Adrenal gland (tissue), 19 donors: ENCODE measurements at regions of chr5 and their contacts with region 1.

Region 1: GRCh38 chr5:77143998-77144836 is 57.1 kb upstream of the ZBED3 start:
- DNase-seq: peak; percentile 71 to 91 (median 84)
- H3K4me3 ChIP-seq: no peak overlapping the region
- H3K27ac ChIP-seq: no peak overlapping the region
- H3K4me1 ChIP-seq: no peaks in the 10 kb centered on the region
- H3K27me3 ChIP-seq: no peaks in the 10 kb centered on the region
- CTCF ChIP-seq: peak; percentile 78 to 91 (median 81)
- POLR2A ChIP-seq: no peak

Region 2: DNA sequence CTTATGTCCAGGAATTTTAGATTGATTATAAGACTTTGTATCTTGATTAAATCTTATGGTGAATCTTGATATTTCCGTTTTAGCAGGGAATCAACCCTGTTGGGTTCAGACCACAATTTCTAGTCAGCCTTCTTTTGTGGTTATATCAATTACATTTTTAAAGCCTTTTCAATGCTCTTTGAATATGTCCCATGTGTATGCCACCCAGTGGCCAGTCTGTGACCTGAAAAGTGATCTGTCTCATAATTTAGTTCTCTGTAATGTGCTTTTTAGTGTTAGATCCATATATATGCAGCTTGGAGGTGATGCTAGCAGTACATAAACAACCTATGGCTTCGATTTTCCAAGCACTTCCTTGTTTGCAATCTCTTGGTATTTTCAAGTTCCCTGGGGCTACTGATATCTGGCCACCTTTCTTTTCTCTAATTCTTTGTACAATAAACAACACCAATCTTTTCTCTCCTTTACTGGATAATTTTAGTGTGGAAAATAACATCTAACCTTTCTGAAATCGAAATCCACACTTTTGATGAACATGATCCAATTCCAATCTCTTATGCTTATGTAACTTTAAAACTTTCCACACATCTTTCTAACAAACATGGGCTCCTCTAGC is 95.0 kb after region 1 on chr5:
- intact Hi-C with region 1: loop called in 1 of 2 experiments (anchors 10 kb)
- DNase-seq: peak in 2 of 7 donors; percentile 30 to 40
- H3K4me3 ChIP-seq: no peak overlapping the region
- H3K27ac ChIP-seq: no peak overlapping the region
- H3K4me1 ChIP-seq: no peaks in the 10 kb centered on the region
- H3K27me3 ChIP-seq: no peaks in the 10 kb centered on the region
- CTCF ChIP-seq: peak in 5 of 6 experiments; percentile 28 to 44 (median 31)
- POLR2A ChIP-seq: no peak

Region 3: DNA sequence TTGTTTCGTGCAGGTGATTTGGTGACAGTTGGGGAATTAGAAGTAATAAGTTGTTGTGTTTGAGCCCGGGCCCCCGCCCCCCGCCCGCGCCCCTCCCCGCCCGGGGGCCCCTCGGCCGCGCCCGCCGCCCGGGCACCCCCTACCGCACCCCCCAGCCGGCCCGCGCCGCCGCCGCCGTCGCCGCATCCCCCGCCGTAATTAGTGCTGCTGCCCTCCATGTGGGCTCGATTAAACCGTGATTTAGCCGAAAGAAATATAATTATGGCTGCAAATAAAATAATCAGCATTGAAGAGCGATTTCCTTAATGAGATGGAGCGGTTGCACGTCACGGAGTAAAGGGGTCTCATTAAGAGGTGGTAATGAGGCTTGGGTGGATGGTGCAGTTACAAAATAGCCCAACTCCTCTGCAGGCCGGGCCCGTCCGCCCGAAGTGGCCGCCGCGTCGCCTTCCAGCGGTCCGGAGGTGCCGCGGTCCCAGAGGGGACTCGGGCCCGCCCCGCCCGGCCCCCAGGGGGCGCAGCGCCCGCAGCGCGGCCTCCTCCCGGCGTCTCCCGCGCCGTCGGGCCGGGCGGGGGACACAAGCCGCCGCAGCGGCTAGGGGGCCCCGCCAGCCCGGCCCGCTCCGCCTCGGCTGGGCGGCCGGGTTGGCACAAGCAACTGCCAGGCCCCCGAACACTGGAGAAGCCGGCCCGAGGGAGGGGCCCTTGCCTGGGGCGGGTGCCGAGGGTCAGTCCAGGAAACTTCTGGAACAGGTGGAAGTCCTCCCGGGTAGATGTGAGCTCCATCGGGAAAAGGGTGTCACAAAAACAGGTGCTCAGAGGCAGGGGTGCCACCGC is 501.2 kb after region 1 on chr5:
- intact Hi-C with region 1: no loop called
- DNase-seq: peak in 4 of 7 donors; percentile 38 to 61 (median 46)
- H3K4me3 ChIP-seq: peak overlapping the region in 1 of 4 donors; percentile 67
- H3K27ac ChIP-seq: no peak overlapping the region
- H3K4me1 ChIP-seq: peaks cover 4% of the 10 kb centered on the region in 2 donors
- H3K27me3 ChIP-seq: peaks cover 55% of the 10 kb centered on the region
- CTCF ChIP-seq: peak in 3 of 6 experiments; percentile 53 to 79 (median 56)
- POLR2A ChIP-seq: no peak

Region 4: GRCh38 chr5:77743181-77743580 is 599.0 kb after region 1 on chr5:
- intact Hi-C with region 1: no loop called
- DNase-seq: peak in 4 of 7 donors; percentile 18 to 41 (median 25)
- H3K4me3 ChIP-seq: no peak overlapping the region
- H3K27ac ChIP-seq: peak overlapping the region in 4 of 5 donors; percentile 2 to 61 (median 36)
- H3K4me1 ChIP-seq: peaks cover 3 to 23% of the 10 kb centered on the region in 2 donors
- H3K27me3 ChIP-seq: no peaks in the 10 kb centered on the region
- CTCF ChIP-seq: no peak
- POLR2A ChIP-seq: no peak